Calu3 (cell line): ENCODE measurements at regions of chr1 and their contacts with region 1.

Region 1: DNA sequence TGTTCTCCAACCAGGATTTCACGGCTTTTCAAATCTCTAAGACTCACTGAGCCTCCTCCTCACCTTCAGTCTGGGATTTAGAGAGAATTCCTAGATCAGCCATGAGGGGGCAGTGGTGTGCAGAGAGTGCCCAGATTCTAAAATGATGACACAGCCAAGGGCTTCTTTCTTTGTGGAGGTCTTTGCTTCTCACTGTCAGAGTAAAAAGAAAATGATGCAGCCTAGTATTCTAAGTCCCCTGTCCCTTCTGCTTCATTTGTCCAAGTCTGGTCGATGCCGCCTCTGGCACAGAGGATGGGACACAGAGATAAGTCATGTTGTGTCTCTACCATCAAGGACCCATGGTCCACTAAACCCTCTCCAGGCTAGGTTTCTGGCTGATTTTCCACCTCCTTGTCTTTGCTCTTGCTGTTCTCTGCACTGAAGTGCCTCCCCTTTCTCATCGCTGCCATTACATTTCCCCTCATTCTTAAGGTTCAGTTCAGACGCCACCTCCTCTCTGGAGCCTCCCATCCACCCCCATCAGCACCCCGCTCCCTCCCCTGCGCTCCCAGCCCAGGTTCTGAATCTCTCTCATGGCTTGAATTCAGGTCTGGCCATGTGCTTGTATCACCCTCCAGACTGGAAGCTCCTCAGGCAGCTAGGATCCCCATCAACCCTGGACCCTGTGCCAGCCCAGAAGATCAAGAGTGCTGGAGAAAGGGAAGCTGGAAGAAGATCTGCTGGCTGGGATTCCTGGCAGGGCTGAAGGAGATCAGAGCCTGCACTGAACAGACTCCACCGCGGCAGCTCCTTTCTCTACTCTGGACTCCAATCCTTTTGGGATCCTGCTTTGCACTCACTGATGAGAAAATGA is 12.0 kb upstream of the TINAGL1 start:
- DNase-seq: peak; percentile 80
- H3K4me3 Mint-ChIP-seq: no peak overlapping the region
- H3K27ac Mint-ChIP-seq: peak overlapping the region; percentile 33
- H3K4me1 Mint-ChIP-seq: peaks cover 30% of the 10 kb centered on the region
- H3K27me3 Mint-ChIP-seq: no peaks in the 10 kb centered on the region
- CTCF ChIP-seq: peak; percentile 93

Region 2: GRCh38 chr1:29984538-29985357 is 1579.6 kb before region 1 on chr1:
- CTCF ChIA-PET with region 1: no interaction called
- intact Hi-C with region 1: no loop called
- DNase-seq: peak; percentile 47
- H3K4me3 Mint-ChIP-seq: peak overlapping the region; percentile 45
- H3K27ac Mint-ChIP-seq: peak overlapping the region; percentile 98
- H3K4me1 Mint-ChIP-seq: peaks cover 44% of the 10 kb centered on the region
- H3K27me3 Mint-ChIP-seq: no peaks in the 10 kb centered on the region
- CTCF ChIP-seq: no peak

Region 3: GRCh38 chr1:31593770-31594632 is 29.6 kb after region 1 on chr1:
- CTCF ChIA-PET with region 1: interaction called, 9 read pairs
- intact Hi-C with region 1: loop called (anchors 1 kb)
- DNase-seq: peak; percentile 94
- H3K4me3 Mint-ChIP-seq: no peak overlapping the region
- H3K27ac Mint-ChIP-seq: peak overlapping the region; percentile 70
- H3K4me1 Mint-ChIP-seq: peaks cover 25% of the 10 kb centered on the region
- H3K27me3 Mint-ChIP-seq: no peaks in the 10 kb centered on the region
- CTCF ChIP-seq: peak; percentile 92